Activated CD4-positive, alpha-beta memory T cell treated with anti-CD3 and anti-CD28 coated beads, Interleukin-2, amount 10 ng/mL, durations not matched to agents 7 days and 5 days (primary cell): ENCODE measurements at regions of chr11 and their contacts with region 1.

Region 1: DNA sequence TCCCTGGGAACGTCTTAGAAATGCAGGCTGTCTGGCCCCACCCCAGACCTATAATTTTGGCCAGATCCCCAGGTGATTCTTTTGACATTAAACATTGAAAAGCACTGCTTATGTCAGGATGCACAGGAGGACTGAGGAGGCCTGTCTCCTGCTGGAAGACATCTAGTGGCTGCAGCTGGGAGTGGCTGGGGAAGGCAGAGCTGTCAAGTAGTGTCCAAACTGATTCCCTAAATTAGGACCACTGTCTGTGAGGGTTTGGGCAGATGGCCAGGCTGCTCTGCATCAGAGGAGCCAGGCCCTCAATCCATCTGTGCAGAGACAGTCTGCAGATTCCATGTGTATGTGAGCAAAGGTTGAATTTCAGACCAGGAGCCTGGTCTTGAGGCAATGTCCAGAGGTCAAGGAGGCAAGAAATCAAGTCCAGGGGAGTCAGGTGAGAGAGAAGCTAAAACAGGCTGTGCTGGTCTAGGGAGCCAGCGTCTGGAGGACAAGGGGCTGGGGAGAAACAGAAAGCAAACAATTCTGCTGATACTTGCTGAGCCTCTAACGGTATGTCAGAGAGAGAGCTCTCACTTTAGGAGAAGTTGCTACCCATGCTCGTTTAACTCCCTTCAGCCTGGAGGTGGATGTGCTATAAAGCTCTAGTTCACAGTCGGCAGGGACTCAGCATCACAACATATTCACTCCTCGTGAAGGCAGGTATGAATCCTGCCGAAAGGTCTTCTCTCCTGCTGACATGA is 15.3 kb upstream of the SYTL2 start:
- DNase-seq: peak; percentile 31
- H3K4me3 Mint-ChIP-seq: no peak overlapping the region
- H3K27ac Mint-ChIP-seq: peak overlapping the region; percentile 41
- H3K4me1 Mint-ChIP-seq: peaks cover 72% of the 10 kb centered on the region
- H3K27me3 Mint-ChIP-seq: no peaks in the 10 kb centered on the region

Region 2: DNA sequence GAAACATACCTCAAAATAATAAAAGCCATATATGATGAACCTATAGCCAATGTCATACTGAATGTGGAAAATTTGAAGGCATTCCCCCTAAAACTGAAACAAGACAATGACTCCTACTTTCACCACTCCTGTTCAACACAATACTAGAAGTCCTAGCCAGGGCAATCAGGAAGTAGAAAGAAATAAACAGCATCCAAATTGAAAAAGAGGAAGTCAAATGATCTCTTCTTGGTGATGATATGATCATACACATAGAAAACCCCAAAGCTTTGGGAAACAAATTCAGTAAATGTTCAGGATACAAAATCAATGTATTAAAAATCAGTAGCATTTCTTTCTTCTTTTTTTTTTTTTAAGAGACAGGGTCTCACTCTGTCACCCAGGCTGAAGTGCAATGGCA is 309.0 kb before region 1 on chr11:
- CTCF ChIA-PET with region 1: no interaction called
- POLR2A ChIA-PET with region 1: no interaction called
- DNase-seq: no peak
- H3K4me3 Mint-ChIP-seq: no peak overlapping the region
- H3K27ac Mint-ChIP-seq: no peak overlapping the region
- H3K4me1 Mint-ChIP-seq: no peaks in the 10 kb centered on the region
- H3K27me3 Mint-ChIP-seq: no peaks in the 10 kb centered on the region

Region 3: GRCh38 chr11:85699957-85700741 is 126.1 kb before region 1 on chr11:
- CTCF ChIA-PET with region 1: interaction called, 8 read pairs
- POLR2A ChIA-PET with region 1: interaction called, 12 read pairs
- DNase-seq: no peak
- H3K4me3 Mint-ChIP-seq: peak overlapping the region; percentile 38
- H3K27ac Mint-ChIP-seq: peak overlapping the region; percentile 78
- H3K4me1 Mint-ChIP-seq: peaks cover 49% of the 10 kb centered on the region
- H3K27me3 Mint-ChIP-seq: no peaks in the 10 kb centered on the region

Region 4: GRCh38 chr11:85752890-85753581 is 73.2 kb before region 1 on chr11:
- CTCF ChIA-PET with region 1: interaction called, 3 read pairs
- POLR2A ChIA-PET with region 1: interaction called, 26 read pairs
- DNase-seq: peak; percentile 94
- H3K4me3 Mint-ChIP-seq: peak overlapping the region; percentile 58
- H3K27ac Mint-ChIP-seq: peak overlapping the region; percentile 94
- H3K4me1 Mint-ChIP-seq: peaks cover 96% of the 10 kb centered on the region
- H3K27me3 Mint-ChIP-seq: no peaks in the 10 kb centered on the region

Region 5: GRCh38 chr11:85810871-85811611 is 15.2 kb before region 1 on chr11 and contains the start of gene SYTL2:
- CTCF ChIA-PET with region 1: interaction called, 11 read pairs
- POLR2A ChIA-PET with region 1: interaction called, 16 read pairs
- DNase-seq: peak; percentile 83
- H3K4me3 Mint-ChIP-seq: peak within 1 kb of the TSS; percentile 86
- H3K27ac Mint-ChIP-seq: peak within 1 kb of the TSS; percentile 47
- H3K4me1 Mint-ChIP-seq: peaks cover 46% of the 10 kb centered on the region
- H3K27me3 Mint-ChIP-seq: peaks cover 7% of the 10 kb centered on the region
- total RNA-seq, gene SYTL2: 93.0 to 99.2 TPM

Region 6: DNA sequence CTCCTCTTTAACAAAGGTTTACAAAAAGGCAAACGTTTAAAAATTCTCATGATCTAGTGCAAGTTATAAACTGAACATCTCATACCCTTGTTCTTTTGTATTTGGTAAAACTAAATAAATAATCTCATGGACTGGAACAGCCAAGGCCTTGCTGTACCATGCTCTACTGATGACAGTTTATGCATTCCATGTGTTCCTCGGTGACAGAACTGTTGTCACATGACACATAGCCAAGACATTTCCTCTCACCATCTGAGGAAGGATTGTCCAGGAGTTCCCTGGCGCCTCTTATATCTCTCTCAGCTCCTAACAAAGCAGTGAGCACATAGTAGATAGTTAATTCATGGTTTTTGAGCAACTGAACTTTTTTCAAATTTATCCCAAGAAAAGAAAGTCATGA is 41.5 kb after region 1 on chr11:
- CTCF ChIA-PET with region 1: no interaction called
- POLR2A ChIA-PET with region 1: no interaction called
- DNase-seq: no peak
- H3K4me3 Mint-ChIP-seq: no peak overlapping the region
- H3K27ac Mint-ChIP-seq: no peak overlapping the region
- H3K4me1 Mint-ChIP-seq: no peaks in the 10 kb centered on the region
- H3K27me3 Mint-ChIP-seq: no peaks in the 10 kb centered on the region